T-cell (primary cell): ENCODE measurements at regions of chr4 and their contacts with region 1.

Region 1: DNA sequence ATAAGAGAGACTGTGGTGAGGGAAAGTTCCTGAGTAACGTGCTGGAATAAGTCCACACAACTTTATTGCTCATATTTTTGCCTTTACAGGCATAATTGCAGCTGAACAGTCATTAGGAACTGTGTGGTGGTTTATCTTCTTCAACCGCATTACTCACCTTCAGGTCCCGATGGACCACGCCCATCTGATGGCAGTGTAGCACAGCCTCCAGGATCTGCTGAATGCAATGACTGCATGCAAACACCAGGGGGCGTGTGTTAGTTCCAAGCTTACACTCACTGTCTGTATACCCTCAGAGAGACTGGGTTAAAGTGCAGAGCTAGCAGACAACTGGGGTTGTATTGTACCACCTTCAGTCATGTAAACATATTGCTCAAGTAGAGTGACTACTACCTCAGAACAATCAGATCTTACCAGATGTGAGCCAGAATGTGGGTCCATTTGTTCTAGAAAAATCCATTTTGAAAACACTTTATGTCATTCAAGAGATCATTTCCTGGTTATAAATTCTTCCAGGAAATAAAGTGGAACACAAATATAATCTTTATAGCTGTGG is 214.0 kb downstream of the CAMK2D start:
- DNase-seq: peak; percentile 66 to 94 (median 85)
- ATAC-seq: peak; percentile 98 to 100 (median 99)
- H3K4me3 ChIP-seq: no peak overlapping the region
- H3K4me3 Mint-ChIP-seq: no peak overlapping the region
- H3K27ac ChIP-seq: peak overlapping the region; percentile 39
- H3K27ac Mint-ChIP-seq: peak overlapping the region; percentile 47 to 62
- H3K4me1 ChIP-seq: peaks cover 3 to 9% of the 10 kb centered on the region in 2 experiments
- H3K4me1 Mint-ChIP-seq: peaks cover 13 to 15% (median 14%) of the 10 kb centered on the region in 3 donors
- H3K27me3 ChIP-seq: no peaks in the 10 kb centered on the region
- H3K27me3 Mint-ChIP-seq: no peaks in the 10 kb centered on the region

Region 2: GRCh38 chr4:113423631-113424030 is 123.9 kb before region 1 on chr4:
- CTCF ChIA-PET with region 1: no interaction called
- POLR2A ChIA-PET with region 1: no interaction called
- DNase-seq: no peak
- ATAC-seq: no peak
- H3K4me3 ChIP-seq: no peak overlapping the region
- H3K4me3 Mint-ChIP-seq: no peak overlapping the region
- H3K27ac ChIP-seq: no peak overlapping the region
- H3K27ac Mint-ChIP-seq: no peak overlapping the region
- H3K4me1 ChIP-seq: no peaks in the 10 kb centered on the region
- H3K4me1 Mint-ChIP-seq: no peaks in the 10 kb centered on the region
- H3K27me3 ChIP-seq: no peaks in the 10 kb centered on the region
- H3K27me3 Mint-ChIP-seq: peaks cover 1 to 4% of the 10 kb centered on the region in 2 donors

Region 3: GRCh38 chr4:113564493-113564892 is 16.9 kb after region 1 on chr4:
- CTCF ChIA-PET with region 1: interaction called, 6 to 12 read pairs
- POLR2A ChIA-PET with region 1: no interaction called
- DNase-seq: no peak
- ATAC-seq: no peak
- H3K4me3 ChIP-seq: no peak overlapping the region
- H3K4me3 Mint-ChIP-seq: peak overlapping the region in 1 of 3 donors; percentile 37
- H3K27ac ChIP-seq: no peak overlapping the region
- H3K27ac Mint-ChIP-seq: peak overlapping the region in 1 of 2 donors; percentile 0
- H3K4me1 ChIP-seq: peaks cover 2 to 7% of the 10 kb centered on the region in 2 experiments
- H3K4me1 Mint-ChIP-seq: peaks cover 39 to 47% (median 41%) of the 10 kb centered on the region in 3 donors
- H3K27me3 ChIP-seq: no peaks in the 10 kb centered on the region
- H3K27me3 Mint-ChIP-seq: no peaks in the 10 kb centered on the region

Region 4: DNA sequence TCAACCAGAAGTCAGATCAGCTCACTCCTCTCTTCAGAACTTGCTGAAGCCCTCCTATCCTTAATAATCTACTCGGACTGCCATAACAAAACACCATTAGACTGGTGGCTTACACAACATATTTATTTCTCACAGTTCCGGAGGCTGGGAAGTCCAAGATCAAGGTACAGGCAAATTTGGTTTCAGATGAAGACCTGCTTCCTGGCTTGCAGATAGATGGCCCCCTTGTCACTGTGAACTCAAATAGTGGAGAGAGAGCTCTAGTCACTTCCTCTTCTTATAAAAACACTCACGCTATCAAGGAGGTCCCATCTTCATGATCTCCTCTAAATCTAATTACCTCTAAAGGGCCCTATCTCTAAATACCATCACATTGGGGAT is 88.9 kb after region 1 on chr4:
- CTCF ChIA-PET with region 1: interaction called in 1 of 2 experiments, 19 read pairs
- POLR2A ChIA-PET with region 1: interaction called in 1 of 2 experiments, 4 read pairs
- DNase-seq: peak in 27 of 35 experiments; percentile 4 to 58 (median 20)
- ATAC-seq: peak; percentile 80 to 83 (median 81)
- H3K4me3 ChIP-seq: no peak overlapping the region
- H3K4me3 Mint-ChIP-seq: peak overlapping the region; percentile 13 to 61 (median 45)
- H3K27ac ChIP-seq: peak overlapping the region; percentile 71
- H3K27ac Mint-ChIP-seq: peak overlapping the region; percentile 86 to 95
- H3K4me1 ChIP-seq: peaks cover 7 to 18% of the 10 kb centered on the region in 2 experiments
- H3K4me1 Mint-ChIP-seq: peaks cover 50 to 59% (median 57%) of the 10 kb centered on the region in 3 donors
- H3K27me3 ChIP-seq: no peaks in the 10 kb centered on the region
- H3K27me3 Mint-ChIP-seq: no peaks in the 10 kb centered on the region